ENCODE measurements at regions of chr2 and their contacts with region 1.

Region 1: DNA sequence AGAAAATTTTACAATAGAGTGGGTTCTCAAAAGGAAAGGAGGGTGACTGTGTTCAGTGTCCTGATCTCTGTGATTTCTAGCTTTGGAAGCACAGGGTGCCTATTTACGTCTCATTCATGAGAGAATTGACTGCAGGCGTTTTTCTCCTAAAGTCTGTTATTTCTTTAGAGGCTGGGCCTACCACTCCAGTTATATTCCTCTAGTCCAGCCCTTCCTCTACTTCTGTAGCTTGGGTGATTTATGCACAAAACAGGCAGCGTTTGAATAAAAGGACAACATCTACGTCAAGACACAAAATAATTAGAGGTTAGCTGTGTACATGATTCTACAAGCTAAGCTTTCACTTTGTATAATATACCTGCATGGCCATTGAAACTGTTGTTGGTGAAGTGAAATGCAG is 32.5 kb upstream of the FAM117B start:
- DNase-seq: no peak
- H3K4me3 ChIP-seq: no peak overlapping the region
- H3K27ac ChIP-seq: no peak overlapping the region
- H3K4me1 ChIP-seq: peaks cover 0 to 3% (median 1%) of the 10 kb centered on the region in 4 experiments
- H3K27me3 ChIP-seq: no peaks in the 10 kb centered on the region

Region 2: DNA sequence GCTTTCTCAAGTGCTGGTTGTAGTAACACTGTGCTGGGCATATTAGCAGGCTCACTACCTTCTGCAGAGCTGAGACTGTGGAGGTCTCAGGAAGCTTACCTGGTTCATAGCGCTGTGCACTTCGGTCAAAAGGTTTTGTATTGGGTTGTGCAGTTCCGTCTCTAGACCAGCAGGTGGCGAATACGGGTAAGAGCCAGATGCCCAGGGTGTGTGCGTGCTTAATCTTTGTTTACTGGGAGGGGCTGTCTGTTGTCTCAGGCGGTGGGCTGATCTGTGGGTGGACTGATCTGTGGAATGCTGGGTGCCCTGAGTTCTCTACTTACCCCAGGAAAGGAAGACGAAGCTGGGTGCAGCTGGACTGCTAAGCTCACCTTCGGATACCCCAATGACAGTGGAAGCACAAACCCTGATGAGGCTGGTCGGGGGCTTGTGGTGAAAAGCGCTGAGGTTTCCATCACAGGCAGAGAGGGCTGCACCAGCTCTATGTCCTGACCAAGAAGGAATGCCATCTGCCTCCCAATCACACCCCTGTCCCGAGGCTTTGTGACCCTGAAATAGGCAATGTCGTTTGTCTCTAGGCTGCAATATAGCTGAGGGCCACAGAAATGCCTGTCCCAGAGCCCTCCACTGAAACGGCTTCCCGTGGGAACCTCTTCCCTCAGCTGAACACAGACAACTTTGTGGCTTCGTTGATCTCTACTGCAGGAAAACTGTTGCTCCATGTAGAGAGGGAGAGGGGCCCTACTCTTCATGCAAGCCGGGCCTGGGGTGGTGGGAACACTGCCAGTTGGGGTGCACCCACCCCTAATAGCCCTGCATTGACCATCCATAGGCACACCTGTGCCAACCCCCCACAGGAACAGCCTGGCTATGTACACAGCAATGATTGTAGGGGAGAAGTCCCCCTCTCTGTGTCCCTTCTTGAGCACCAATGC is 13.4 kb before region 1 on chr2:
- CTCF ChIA-PET with region 1: interaction called, 23 read pairs
- POLR2A ChIA-PET with region 1: no interaction called
- DNase-seq: peak; percentile 72 to 83 (median 80)
- H3K4me3 ChIP-seq: peak overlapping the region in 1 of 7 experiments; percentile 31
- H3K27ac ChIP-seq: no peak overlapping the region
- H3K4me1 ChIP-seq: peaks cover 0 to 5% (median 0%) of the 10 kb centered on the region in 4 experiments
- H3K27me3 ChIP-seq: no peaks in the 10 kb centered on the region